Motor neuron (in vitro differentiated cells): ENCODE measurements at regions of chr19 and their contacts with region 1.

Region 1: GRCh38 chr19:2391118-2391725 is 31.2 kb downstream of the TMPRSS9 start:
- ATAC-seq: peak; percentile 26 to 79 (median 56)
- H3K4me3 ChIP-seq: no peak overlapping the region
- H3K27ac ChIP-seq: no peak overlapping the region
- H3K4me1 ChIP-seq: peaks cover 0 to 5% of the 10 kb centered on the region in 2 donors

Region 2: GRCh38 chr19:2274931-2275535 is 116.2 kb before region 1 on chr19:
- in situ Hi-C with region 1: loop called in 2 of 9 experiments (anchors 25 kb)
- ATAC-seq: peak; percentile 2 to 46 (median 19)
- H3K4me3 ChIP-seq: no peak overlapping the region
- H3K27ac ChIP-seq: no peak overlapping the region
- H3K4me1 ChIP-seq: peaks cover 21 to 26% of the 10 kb centered on the region in 2 donors

Region 3: DNA sequence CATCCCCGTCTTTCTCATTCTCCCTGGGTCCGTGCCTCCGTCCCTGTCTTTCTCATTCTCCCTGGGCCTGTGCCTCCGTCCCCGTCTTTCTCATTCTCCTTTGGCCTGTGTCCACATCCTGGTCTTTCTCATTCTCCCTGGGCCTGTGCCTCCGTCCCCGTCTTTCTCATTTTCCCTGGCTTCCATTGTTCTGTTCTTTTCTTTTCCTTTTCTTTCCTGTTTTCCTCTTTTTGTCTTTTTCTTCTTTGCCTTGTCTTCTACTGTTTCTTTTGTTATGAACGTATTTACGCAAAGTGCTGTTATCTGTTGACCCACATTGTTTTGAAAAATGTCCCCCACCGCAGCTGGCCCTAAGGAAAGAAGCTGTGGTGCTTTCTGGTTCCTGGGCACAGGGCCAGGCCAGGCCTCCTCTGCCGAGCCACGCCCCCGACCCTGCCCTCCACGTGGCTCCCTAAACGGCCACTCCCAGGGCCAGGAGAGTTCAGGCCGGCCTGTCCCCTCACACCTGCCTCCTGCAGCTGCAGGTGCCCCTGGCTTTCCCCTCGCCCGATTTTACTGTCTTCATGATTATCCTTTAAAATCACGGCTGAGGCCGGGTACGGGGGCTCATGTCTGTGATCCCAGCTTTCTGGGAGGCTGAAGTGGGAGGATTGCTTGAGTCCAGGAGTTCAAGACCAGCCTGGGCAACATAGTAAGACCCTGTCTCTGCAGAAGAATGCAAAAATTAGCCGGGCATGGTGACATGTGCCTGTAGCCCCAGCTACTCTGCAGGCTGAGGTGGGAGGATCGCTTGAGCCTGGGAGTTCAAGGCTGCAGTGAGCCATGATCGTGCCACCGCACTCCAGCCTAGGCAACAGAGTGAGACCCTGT is 45.2 kb before region 1 on chr19:
- in situ Hi-C with region 1: no loop called
- ATAC-seq: peak in 3 of 8 experiments; percentile 65 to 70 (median 70)
- H3K4me3 ChIP-seq: no peak overlapping the region
- H3K27ac ChIP-seq: no peak overlapping the region
- H3K4me1 ChIP-seq: no peaks in the 10 kb centered on the region

Region 4: GRCh38 chr19:2455851-2456570 is 64.8 kb after region 1 on chr19:
- in situ Hi-C with region 1: no loop called
- ATAC-seq: peak; percentile 5 to 34 (median 18)
- H3K4me3 ChIP-seq: peak overlapping the region; percentile 77 to 100 (median 89)
- H3K27ac ChIP-seq: peak overlapping the region; percentile 73 to 84
- H3K4me1 ChIP-seq: peaks cover 6 to 7% of the 10 kb centered on the region in 2 donors